Naive thymus-derived CD8-positive, alpha-beta T cell (primary cell): ENCODE measurements at regions of chr4 and their contacts with region 1.

Region 1: DNA sequence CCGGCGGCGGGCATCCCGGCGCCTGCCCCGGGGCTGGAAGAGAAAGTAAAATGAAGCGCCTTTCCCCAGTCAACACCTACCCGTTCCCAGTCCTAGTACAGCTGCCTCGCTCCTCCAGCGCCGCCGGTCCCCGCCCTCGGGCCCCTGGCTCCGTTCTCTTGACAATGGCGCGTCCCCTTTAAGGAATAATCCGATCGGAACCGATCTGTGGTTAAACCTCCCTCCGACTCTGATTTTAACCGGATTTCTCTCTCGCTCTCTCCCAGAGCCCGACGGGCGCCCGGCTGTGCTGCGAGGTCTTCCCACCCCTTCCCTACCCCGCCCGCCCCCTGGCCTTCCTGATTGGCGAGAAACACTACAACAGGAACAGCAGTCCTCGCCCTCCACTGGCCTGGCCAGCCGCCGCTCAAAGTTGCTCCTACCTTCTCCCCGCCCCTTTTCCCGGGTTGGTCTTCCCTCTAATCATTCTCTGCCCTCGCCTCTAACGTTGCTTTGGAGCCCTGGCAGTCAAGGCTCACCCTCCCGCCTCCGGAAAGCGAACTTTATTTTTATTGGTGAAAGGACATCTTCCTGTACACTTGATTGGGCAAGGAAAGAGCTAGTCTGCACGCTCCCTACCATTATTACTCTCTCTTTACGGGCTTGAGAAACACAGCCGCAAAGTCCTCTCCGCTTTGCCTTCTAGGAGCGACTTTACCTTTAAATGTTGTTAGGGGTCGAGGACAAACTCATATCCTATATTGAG is at the start of gene FRYL:
- DNase-seq: peak; percentile 92 to 99 (median 97)
- ATAC-seq: peak; percentile 86 to 87
- H3K4me3 Mint-ChIP-seq: peak within 1 kb of the TSS; percentile 86 to 96 (median 94)
- H3K27ac Mint-ChIP-seq: peak within 1 kb of the TSS; percentile 87 to 97 (median 94)
- H3K4me1 Mint-ChIP-seq: peaks cover 10 to 47% (median 42%) of the 10 kb centered on the region in 4 donors
- H3K27me3 Mint-ChIP-seq: no peaks in the 10 kb centered on the region
- polyA plus RNA-seq, gene FRYL: 31.4 to 36.4 (median 31.6) TPM

Region 2: DNA sequence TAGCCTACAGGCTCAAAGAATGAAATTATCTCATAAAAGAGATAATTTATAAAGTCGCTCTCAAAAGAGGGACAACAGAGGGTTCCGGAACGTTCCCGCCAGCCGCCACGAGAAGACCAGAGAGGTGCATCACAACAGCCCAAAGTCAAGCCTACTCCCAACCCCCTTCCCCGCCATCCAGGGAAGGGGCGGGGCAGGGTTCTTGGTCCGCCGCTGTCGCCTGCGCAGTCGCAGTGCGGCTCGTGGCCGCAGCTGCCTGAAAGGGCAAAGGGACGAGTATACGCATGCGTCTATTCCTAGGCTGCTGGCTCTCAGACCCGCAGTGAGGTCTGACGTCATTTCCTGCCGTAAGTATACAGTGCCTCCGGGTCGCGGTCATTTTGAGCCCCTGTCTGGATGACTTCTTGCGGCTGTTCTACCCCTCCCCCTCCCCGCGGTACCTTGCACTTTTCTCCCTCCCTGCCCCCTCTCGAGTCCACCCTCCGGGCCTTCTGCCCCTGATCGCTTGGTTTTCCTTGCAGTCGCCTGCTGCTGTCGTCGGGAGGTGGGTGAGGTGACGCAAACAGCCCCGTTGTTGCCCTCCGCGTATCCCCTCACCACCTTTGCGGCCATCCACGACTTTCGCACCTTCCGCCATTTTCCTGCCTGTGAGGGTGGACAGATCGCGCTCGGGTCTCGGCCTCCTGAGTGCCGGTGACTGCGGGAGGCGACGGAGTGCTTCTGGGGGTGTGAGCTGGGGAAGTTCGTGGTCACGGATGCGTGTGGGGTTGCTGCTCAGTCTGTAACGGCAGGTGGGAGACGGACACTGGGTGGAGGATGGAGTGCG is 50.7 kb after region 1 on chr4 and contains the start of gene OCIAD1:
- POLR2A ChIA-PET with region 1: interaction called, 20 read pairs
- DNase-seq: peak; percentile 81 to 98 (median 94)
- ATAC-seq: peak; percentile 95 to 96
- H3K4me3 Mint-ChIP-seq: peak within 1 kb of the TSS; percentile 95 to 100 (median 100)
- H3K27ac Mint-ChIP-seq: peak within 1 kb of the TSS; percentile 99 to 100 (median 100)
- H3K4me1 Mint-ChIP-seq: peaks cover 13 to 37% (median 34%) of the 10 kb centered on the region in 4 donors
- H3K27me3 Mint-ChIP-seq: peaks cover 0 to 3% (median 0%) of the 10 kb centered on the region in 5 donors
- polyA plus RNA-seq, gene OCIAD1: 172 to 191 (median 188) TPM